ENCODE measurements at regions of chr19 and their contacts with region 1.

Region 1: DNA sequence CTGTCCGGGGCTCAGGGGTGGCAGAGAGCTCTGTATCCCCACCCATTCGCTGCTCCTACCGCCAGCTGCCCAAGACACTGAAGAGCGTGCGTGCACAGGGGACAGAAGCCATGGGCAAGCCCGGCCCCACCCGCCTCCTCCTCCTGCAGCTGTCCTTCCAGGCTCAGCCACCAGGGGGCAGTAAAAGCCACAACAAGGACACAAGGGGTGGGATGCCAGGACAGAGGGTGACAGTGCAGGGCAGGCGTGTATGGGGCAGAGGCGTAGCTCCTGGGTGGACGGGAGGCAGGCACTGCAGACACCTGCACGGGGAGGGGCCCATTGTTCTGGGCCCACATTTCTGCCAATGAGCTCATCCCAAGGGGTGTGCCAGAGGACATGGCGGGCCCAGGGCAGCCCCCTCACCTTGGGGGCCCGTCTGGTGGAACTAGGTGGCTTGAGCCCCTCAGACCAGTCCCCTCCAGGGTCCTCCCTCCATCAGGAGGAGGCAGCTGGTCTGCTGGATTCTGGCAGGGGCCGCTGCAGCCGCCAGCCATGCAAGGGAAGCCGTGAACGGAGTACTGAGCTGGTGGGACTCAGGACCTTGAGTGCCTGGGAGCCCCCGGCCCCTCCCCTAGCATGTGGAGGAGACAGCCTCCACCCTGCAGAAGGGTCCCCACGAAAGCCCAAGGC is 61.1 kb downstream of the MLLT1 start:
- DNase-seq: no peak
- H3K4me3 ChIP-seq: no peak overlapping the region
- CTCF ChIP-seq: peak; percentile 97

Region 2: DNA sequence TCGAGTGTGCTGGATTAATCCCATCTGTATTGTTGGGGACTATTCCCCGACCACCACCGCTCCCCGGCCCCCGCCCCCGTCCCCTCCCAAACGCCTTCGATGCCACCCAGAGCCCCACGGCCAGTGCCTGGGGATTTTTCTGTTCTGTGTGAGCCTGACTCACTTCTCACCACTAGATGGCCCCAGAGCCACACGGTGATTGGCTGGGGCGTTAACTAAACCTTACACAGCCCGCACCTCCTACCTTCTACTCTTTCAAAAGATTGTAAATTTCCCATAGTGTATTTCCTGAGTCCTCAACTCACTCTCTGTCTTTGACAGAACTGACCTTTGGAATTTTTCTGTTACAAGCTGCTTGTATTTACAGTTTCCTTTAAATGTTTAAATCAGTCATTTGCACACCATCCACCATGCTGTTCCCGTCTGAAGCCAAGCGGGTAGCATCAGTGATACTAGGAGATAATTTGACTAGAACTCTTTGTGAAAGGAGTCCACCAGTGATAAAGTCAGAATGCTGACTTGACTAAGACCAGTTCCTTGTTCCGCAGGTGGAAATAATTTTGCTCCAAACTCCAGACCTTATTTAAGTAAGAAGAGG is 169.7 kb before region 1 on chr19:
- CTCF ChIA-PET with region 1: interaction called, 14 read pairs
- POLR2A ChIA-PET with region 1: no interaction called
- DNase-seq: no peak
- H3K4me3 ChIP-seq: no peak overlapping the region
- CTCF ChIP-seq: peak; percentile 86

Region 3: DNA sequence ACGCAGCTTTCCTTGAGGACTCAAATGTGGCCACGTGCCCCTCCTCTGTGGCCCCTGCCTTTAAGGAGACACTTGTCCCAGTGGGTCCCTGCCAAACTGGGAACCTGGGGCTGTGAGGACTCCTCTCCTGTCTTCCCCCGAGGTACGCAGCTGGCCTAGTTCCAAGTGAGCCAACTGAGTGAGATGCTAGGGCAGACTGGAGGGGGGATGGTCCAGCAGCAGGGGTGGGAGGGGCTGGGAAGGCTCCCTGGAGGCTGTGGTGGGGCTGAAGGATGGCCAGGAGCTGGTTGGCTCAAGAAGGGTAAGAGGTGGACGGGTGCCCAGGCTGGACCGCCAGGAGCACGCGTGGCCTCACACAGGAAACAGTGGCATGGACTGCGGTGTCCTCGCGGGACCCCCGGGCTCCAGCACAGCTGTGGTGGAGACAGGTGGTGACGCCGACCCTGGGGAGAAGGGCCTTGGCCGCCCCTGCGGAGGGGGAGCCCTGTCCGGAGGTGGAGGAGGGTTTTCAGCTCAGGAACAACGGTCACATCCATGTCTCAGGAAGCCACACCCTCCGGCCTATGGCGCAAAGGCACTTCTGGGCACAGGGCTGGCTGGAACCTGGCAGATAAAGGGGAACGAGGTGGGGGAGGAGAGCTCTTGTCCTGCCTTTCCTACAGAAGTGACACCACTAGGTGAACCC is 15.3 kb after region 1 on chr19:
- CTCF ChIA-PET with region 1: interaction called, 129 read pairs
- POLR2A ChIA-PET with region 1: no interaction called
- DNase-seq: no peak
- H3K4me3 ChIP-seq: no peak overlapping the region
- CTCF ChIP-seq: no peak

Region 4: DNA sequence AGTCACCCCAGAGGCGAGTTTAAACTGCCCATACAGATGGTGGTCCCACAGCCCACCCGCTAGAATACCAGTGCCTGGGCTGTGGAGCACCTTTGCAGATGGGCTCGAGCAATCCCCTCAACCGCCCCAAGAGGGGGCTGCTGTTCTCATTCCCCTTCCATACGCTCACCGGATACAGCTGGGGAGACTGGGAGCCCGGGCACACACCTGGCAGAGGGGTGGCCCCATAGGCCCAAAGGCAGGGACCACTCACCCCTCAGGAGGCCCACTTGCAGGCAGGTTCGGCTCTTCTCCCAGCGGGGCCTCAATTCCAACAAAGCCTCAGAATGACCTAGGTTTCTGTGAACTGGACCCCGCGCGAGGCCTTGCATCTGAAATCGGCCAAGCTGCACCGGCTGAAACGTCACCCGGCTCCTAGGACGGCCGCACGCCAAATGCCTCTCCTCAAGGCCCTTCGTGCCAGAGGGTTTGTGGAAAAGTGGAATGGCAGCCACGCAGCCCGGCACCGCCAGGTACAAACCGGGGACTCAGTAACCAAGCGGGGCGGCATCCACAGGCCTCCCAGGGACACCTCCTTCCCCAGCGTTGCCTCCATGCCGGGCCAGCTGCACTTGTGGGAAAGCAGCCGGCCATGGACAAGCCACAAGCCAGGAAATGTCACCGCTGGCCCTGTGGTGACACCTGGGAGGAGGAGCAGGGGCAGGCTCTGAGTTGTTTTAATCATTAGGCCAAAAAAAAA is 42.5 kb after region 1 on chr19:
- CTCF ChIA-PET with region 1: interaction called, 13 read pairs
- POLR2A ChIA-PET with region 1: no interaction called
- DNase-seq: no peak
- H3K4me3 ChIP-seq: no peak overlapping the region
- CTCF ChIP-seq: peak; percentile 61

Region 5: GRCh38 chr19:6287269-6287885 is 68.8 kb after region 1 on chr19:
- CTCF ChIA-PET with region 1: interaction called, 29 read pairs
- POLR2A ChIA-PET with region 1: no interaction called
- DNase-seq: no peak
- H3K4me3 ChIP-seq: no peak overlapping the region
- CTCF ChIP-seq: no peak

Region 6: GRCh38 chr19:6312018-6312417 is 93.4 kb after region 1 on chr19:
- CTCF ChIA-PET with region 1: interaction called, 11 read pairs
- POLR2A ChIA-PET with region 1: no interaction called
- DNase-seq: no peak
- H3K4me3 ChIP-seq: no peak overlapping the region
- CTCF ChIP-seq: no peak

Region 7: DNA sequence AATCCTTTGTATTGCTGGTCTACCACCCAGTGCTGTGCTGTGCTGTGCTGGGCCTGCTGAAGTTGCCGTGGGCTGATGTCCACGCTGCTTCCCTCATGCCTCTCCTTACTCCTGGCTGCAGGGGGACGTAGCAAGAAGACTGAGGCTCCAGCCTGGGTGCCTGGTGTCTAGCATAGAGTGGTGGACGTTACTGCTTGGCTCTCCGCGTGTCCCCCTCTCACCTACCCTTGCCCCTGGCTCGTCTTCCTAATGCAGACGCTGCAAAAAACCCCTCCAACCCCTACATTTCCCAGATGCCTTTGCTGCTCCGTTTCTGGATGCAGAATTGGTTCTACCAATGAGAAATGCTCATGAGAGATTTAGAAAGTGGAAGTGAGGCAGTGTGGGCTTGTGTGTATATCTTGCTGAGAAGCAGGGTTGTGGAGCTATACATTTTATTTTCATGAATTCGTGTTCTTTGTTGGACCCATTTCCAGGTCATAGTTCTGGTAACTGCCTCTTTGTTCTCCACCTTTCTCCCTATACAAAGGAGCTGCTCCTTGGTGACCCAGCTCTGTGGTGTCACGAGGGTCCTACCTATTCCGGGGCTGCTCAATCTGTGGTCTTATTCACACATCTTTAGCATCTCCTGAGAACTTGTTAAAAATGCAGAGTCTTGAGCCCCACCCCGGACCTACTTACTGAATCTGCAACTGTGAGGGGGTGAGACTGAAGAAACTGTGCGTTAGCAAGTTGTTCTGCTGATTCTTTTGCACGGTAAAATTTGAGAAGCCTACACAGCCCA is 270.8 kb after region 1 on chr19:
- CTCF ChIA-PET with region 1: no interaction called
- POLR2A ChIA-PET with region 1: no interaction called
- DNase-seq: no peak
- H3K4me3 ChIP-seq: no peak overlapping the region
- CTCF ChIP-seq: no peak

Region 8: GRCh38 chr19:6862673-6863078 is 644.0 kb after region 1 on chr19:
- CTCF ChIA-PET with region 1: interaction called, 11 read pairs
- POLR2A ChIA-PET with region 1: no interaction called
- DNase-seq: peak; percentile 9
- H3K4me3 ChIP-seq: peak overlapping the region; percentile 40
- CTCF ChIP-seq: peak; percentile 86